Activated CD4-positive, alpha-beta T cell treated with anti-CD3 and anti-CD28 coated beads for 36 hours (primary cell): ENCODE measurements at regions of chr16 and their contacts with region 1.

Region 1: DNA sequence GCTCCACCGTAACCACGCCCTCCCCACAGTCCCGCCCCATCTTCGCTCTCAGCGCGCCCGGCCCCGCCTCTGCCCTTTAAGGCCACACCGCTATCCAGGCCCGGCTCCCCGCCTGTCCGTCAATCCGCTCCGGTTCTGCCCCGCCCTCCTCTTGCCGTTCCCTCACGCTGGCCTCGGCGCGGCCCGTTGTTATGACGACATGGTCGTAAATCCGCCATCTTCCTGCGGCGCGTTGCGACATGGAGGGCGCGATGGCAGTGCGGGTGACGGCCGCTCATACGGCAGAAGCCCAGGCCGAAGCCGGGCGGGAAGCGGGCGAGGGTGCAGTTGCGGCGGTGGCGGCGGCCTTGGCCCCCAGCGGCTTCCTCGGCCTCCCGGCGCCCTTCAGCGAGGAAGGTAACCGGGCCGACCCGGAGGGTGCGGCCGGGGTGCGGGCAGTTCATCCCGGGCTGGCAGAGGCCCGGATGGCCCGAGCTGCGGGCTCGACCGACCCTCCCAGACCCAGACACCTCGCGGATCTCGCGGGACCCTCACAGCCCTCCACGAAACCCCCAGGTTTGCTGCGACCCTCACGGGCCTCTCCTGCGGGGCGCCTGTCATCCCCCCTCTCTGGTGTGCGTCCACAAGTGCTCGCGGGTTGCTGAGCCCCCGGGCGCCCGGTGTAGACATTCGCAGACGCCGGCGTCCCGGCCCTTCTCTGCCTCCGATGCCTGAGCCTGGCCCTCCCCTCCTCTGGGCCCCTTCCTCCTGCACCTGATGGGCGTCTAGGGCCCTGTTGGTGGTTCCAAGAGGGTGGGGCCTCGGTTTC is at the start of gene E4F1:
- DNase-seq: peak; percentile 100
- ATAC-seq: peak; percentile 99
- H3K4me3 Mint-ChIP-seq: peak within 1 kb of the TSS; percentile 78
- H3K27ac Mint-ChIP-seq: peak within 1 kb of the TSS; percentile 13
- H3K4me1 Mint-ChIP-seq: peaks cover 15% of the 10 kb centered on the region
- H3K27me3 Mint-ChIP-seq: no peaks in the 10 kb centered on the region
- total RNA-seq, gene E4F1: 18.0 to 18.6 TPM

Region 2: GRCh38 chr16:1734123-1734832 is 489.3 kb before region 1 on chr16:
- CTCF ChIA-PET with region 1: no interaction called
- POLR2A ChIA-PET with region 1: no interaction called
- intact Hi-C with region 1: no loop called
- DNase-seq: no peak
- ATAC-seq: no peak
- H3K4me3 Mint-ChIP-seq: no peak overlapping the region
- H3K27ac Mint-ChIP-seq: no peak overlapping the region
- H3K4me1 Mint-ChIP-seq: no peaks in the 10 kb centered on the region
- H3K27me3 Mint-ChIP-seq: no peaks in the 10 kb centered on the region

Region 3: DNA sequence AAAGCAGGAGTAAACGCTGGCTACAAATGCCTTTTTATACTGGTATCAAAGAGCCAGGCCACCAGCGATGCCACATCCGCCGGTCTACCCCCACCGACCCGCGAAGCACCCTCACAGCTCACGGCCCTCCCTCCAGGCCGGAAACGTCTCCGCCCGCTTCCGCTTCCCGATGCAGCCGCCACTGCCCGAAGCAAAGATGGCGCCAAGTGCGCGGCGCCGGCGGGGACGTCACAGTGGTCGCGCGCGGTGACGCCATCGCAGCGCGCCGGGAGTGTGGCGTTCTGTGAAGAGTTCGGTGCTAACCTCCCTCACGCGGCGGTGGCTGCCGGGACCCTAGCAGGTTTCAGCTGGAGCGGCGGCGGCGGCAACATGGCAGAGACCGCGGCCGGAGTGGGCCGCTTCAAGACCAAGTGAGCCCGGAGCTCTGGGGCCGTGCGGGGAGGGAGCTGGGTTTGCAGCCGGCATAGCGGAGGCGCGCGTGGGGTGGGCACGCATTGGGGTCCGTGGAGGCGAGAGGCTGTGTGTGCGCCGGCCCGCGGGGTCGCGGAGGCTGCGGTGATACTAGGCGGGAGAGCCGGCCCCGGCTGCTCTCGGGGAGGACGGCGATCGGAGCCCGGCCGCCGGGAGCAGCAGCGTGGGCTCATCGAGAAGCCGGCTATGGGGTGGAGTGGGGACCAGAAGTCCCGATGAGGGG is 251.6 kb before region 1 on chr16 and contains the start of gene TBL3:
- CTCF ChIA-PET with region 1: no interaction called
- POLR2A ChIA-PET with region 1: no interaction called
- intact Hi-C with region 1: loop called in 1 of 2 experiments (anchors 1 kb)
- DNase-seq: peak; percentile 98
- ATAC-seq: peak; percentile 97
- H3K4me3 Mint-ChIP-seq: peak within 1 kb of the TSS; percentile 99
- H3K27ac Mint-ChIP-seq: peak within 1 kb of the TSS; percentile 99
- H3K4me1 Mint-ChIP-seq: peaks cover 16% of the 10 kb centered on the region
- H3K27me3 Mint-ChIP-seq: no peaks in the 10 kb centered on the region
- total RNA-seq, gene TBL3: 47.4 to 48.6 TPM

Region 4: GRCh38 chr16:2178321-2179106 is 45.1 kb before region 1 on chr16:
- CTCF ChIA-PET with region 1: no interaction called
- POLR2A ChIA-PET with region 1: no interaction called
- intact Hi-C with region 1: loop called in 1 of 2 experiments (anchors 1 kb)
- DNase-seq: peak; percentile 70
- ATAC-seq: peak; percentile 80
- H3K4me3 Mint-ChIP-seq: no peak overlapping the region
- H3K27ac Mint-ChIP-seq: no peak overlapping the region
- H3K4me1 Mint-ChIP-seq: no peaks in the 10 kb centered on the region
- H3K27me3 Mint-ChIP-seq: no peaks in the 10 kb centered on the region

Region 5: GRCh38 chr16:2205104-2205966 is 18.2 kb before region 1 on chr16 and contains the start of gene MLST8:
- CTCF ChIA-PET with region 1: interaction called, 3 read pairs
- POLR2A ChIA-PET with region 1: no interaction called
- intact Hi-C with region 1: loop called (anchors 1 kb)
- DNase-seq: peak; percentile 92
- ATAC-seq: peak; percentile 84
- H3K4me3 Mint-ChIP-seq: peak within 1 kb of the TSS; percentile 83
- H3K27ac Mint-ChIP-seq: peak within 1 kb of the TSS; percentile 84
- H3K4me1 Mint-ChIP-seq: peaks cover 16% of the 10 kb centered on the region
- H3K27me3 Mint-ChIP-seq: no peaks in the 10 kb centered on the region
- total RNA-seq, gene MLST8: 61.3 to 76.1 TPM

Region 6: GRCh38 chr16:2513405-2514322 is 290.1 kb after region 1 on chr16 and contains the start of gene ATP6V0C:
- CTCF ChIA-PET with region 1: no interaction called
- POLR2A ChIA-PET with region 1: no interaction called
- intact Hi-C with region 1: loop called in 1 of 2 experiments (anchors 1 kb)
- DNase-seq: peak; percentile 95
- ATAC-seq: peak; percentile 90
- H3K4me3 Mint-ChIP-seq: peak within 1 kb of the TSS; percentile 93
- H3K27ac Mint-ChIP-seq: peak within 1 kb of the TSS; percentile 95
- H3K4me1 Mint-ChIP-seq: peaks cover 44% of the 10 kb centered on the region
- H3K27me3 Mint-ChIP-seq: no peaks in the 10 kb centered on the region
- total RNA-seq, gene ATP6V0C: 91.7 to 130 TPM